SK-N-SH (cell line): ENCODE measurements at regions of chr7 and their contacts with region 1.

Region 1: DNA sequence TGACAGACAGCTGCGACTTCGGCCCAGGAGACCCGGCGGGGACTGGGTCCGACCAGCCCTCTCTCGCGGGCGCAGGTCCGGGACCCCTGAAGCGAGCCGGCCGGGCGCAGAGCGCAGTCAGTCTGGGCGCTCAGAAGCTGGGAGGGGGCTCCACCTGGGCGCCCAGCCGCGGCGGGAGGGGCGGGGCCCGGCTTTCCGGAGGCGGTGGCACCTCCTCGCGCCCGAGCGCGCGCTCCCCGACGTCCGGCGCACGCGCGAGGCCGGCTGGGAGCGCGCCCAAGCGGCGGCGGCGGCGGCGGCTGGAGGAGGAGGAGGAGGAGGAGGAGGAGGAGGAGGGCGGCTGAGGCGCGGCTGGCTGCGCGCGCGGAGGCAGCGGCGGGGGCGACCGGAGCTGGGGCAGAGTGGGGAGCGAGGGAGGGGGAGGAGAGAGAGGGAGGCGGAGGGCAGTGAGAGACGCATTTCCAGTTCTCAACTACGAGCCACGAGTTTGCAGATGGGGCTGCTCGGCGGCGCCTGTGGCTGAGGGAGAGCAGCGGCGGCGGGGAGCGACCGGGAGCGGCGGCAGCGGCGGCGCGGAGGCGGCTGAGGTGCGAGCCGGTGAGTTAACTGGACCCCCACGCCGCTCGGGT is at the start of gene PALS2:
- DNase-seq: peak; percentile 95
- H3K4me3 ChIP-seq: peak within 1 kb of the TSS; percentile 93 to 98
- H3K27ac ChIP-seq: peak within 1 kb of the TSS; percentile 20 to 61; a peak in 3 of 4 replicates
- H3K4me1 ChIP-seq: peaks cover 0 to 31% of the 10 kb centered on the region in 2 experiments; a peak in 2 of 4 replicates
- H3K27me3 ChIP-seq: peaks cover 12% of the 10 kb centered on the region; the same call in 1 of the 2 replicates
- CTCF ChIP-seq: no peak; the same call in 1 of the 2 replicates
- EP300 ChIP-seq: 0 out of 4 replicates have a peak, but pooled peaks of 1 of the 2 experiments have one; percentile 11
- RAD21 ChIP-seq: no peak
- polyA plus RNA-seq, gene PALS2: 6.1 and 6.9 TPM in 2 replicates

Region 2: GRCh38 chr7:24531255-24531654 is 41.9 kb before region 1 on chr7:
- CTCF ChIA-PET with region 1: no interaction called
- POLR2A ChIA-PET with region 1: no interaction called
- DNase-seq: no peak
- H3K4me3 ChIP-seq: no peak overlapping the region
- H3K27ac ChIP-seq: no peak overlapping the region
- H3K4me1 ChIP-seq: no peaks in the 10 kb centered on the region
- H3K27me3 ChIP-seq: no peaks in the 10 kb centered on the region
- CTCF ChIP-seq: no peak
- EP300 ChIP-seq: no peak
- RAD21 ChIP-seq: no peak

Region 3: GRCh38 chr7:24587848-24588247 is 14.7 kb after region 1 on chr7:
- CTCF ChIA-PET with region 1: interaction called, 54 read pairs
- POLR2A ChIA-PET with region 1: interaction called, 5 read pairs
- DNase-seq: no peak
- H3K4me3 ChIP-seq: no peak overlapping the region; a peak in 1 of 4 replicates
- H3K27ac ChIP-seq: no peak overlapping the region
- H3K4me1 ChIP-seq: no peaks in the 10 kb centered on the region
- H3K27me3 ChIP-seq: no peaks in the 10 kb centered on the region
- CTCF ChIP-seq: peak; percentile 55
- EP300 ChIP-seq: no peak
- RAD21 ChIP-seq: peak; percentile 66

Region 4: DNA sequence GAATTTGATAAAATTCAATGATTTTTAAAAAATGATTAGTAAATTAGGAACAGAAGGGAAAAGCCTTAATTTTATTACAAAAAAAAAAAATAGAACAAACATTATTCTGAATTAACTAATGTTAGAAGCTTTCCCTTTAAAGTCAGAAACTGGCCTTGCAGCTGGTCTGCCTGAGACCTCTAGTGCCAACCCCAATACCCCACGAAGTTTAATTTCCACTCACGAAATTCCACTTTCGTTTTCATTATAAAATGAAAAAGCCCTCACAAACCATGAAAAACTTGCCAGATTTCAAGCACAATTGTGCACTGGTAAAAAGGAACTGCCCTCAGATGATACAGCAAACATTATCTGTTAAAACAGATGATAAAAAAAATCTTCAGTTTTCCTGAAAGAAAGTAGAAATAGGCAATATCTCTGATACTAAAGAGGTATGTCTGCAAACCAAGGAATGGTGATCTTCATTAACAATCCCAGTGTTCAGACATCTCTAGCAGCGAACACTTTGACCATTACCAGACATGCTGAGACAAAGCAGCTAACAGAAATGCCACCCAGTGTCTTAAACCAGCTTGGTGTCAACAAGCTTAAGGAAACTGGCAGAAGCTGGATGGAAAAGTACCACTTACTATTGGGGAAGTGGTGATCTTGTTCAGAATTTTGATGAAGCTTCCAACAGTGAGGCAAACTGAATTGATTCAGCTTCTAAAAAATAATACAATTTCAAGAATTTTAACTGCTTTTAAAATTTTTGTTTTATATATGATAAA is 80.4 kb after region 1 on chr7:
- CTCF ChIA-PET with region 1: interaction called, 11 read pairs
- POLR2A ChIA-PET with region 1: no interaction called
- DNase-seq: no peak
- H3K4me3 ChIP-seq: no peak overlapping the region
- H3K27ac ChIP-seq: peak overlapping the region in 1 of 2 experiments; percentile 30; a peak in 1 of 4 replicates
- H3K4me1 ChIP-seq: peaks cover 0 to 2% of the 10 kb centered on the region in 2 experiments; a peak in 1 of 4 replicates
- H3K27me3 ChIP-seq: no peaks in the 10 kb centered on the region
- CTCF ChIP-seq: no peak
- EP300 ChIP-seq: no peak
- RAD21 ChIP-seq: no peak

Region 5: DNA sequence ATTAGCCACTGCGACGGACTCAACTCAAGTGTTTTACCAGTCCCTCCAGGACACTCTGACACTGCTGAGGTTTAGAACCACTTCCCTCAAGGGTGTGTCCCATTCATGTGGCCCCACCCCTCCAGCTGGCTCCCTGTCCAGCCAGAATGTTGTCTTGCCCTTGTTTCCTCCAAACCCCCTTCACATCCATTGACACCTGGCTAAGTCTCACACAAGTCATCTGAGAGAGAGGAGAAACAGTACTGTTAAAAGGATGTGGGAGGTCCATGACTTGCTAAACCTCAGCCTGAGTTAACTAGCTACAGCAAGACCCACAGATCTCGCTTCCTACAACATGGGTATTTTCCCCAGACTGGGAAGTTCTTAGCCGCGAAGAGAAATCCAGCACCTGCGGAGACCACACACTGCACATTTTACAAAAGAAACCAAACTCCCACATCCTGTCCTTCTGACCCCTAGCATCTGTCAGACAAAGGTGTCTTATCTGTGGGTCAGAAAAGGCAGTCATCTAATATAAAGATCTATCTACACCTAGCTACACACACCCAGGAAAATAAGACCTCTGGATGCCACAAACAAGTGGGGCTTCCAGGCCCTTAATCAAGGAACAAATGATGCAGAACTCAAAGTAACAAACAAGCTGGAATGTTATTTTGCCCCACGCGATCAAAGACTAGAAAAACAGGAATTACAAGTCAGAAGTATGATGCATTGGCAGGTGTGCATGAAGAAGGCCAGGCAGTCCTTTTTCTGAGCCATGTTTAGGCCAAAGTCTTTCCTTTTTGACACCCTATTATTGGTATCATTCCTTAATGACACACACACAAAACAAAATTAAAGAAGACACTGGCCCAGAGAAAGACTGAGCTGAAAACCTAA is 393.0 kb after region 1 on chr7:
- CTCF ChIA-PET with region 1: no interaction called
- POLR2A ChIA-PET with region 1: no interaction called
- DNase-seq: no peak
- H3K4me3 ChIP-seq: no peak overlapping the region
- H3K27ac ChIP-seq: no peak overlapping the region
- H3K4me1 ChIP-seq: peaks cover 12 to 18% of the 10 kb centered on the region in 2 experiments
- H3K27me3 ChIP-seq: no peaks in the 10 kb centered on the region
- CTCF ChIP-seq: no peak
- EP300 ChIP-seq: no peak
- RAD21 ChIP-seq: no peak